ENCODE measurements at regions of chr2 and their contacts with region 1.

Region 1: DNA sequence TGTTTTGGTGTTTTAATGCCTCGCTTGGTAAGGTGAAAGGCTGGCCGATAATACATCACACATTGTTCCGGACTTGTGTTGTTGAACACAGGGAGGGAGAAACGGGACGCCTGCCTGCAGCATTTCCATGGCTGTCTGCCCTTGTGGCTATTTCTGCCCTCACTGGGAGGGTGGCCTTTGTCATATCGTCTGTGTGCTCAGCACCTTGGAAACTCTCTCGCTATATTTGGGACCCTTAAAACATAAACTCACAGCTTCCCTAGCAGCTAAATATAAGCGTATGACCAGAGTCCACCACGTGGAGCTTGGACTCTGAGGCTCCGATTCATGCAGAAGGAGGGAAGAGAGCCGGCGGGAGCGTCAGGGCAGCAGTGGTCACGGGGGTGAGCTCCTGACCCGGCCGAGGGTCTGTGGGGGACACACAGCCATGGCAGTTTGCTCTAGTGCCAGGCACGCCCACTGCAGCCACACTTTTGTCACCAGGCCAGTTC is 111.7 kb downstream of the SH3BP4 start:
- DNase-seq: peak in 4 of 5 donors; percentile 61 to 87 (median 78)
- ATAC-seq: peak; percentile 97 to 98 (median 98)
- H3K4me3 ChIP-seq: peak overlapping the region in 3 of 12 donors; percentile 2 to 19 (median 5)
- H3K27ac ChIP-seq: peak overlapping the region; percentile 49 to 92 (median 80)
- H3K4me1 ChIP-seq: peaks cover 0 to 26% (median 2%) of the 10 kb centered on the region in 12 donors
- H3K27me3 ChIP-seq: no peaks in the 10 kb centered on the region
- CTCF ChIP-seq: no peak
- POLR2A ChIP-seq: peak; percentile 20 to 53

Region 2: GRCh38 chr2:235050992-235051351 is 12.5 kb before region 1 on chr2:
- intact Hi-C with region 1: loop called in 1 of 10 experiments (anchors 1 kb)
- DNase-seq: peak; percentile 89 to 97 (median 93)
- ATAC-seq: peak; percentile 90 to 95 (median 90)
- H3K4me3 ChIP-seq: no peak overlapping the region
- H3K27ac ChIP-seq: peak overlapping the region; percentile 51 to 86 (median 78)
- H3K4me1 ChIP-seq: peaks cover 2 to 57% (median 27%) of the 10 kb centered on the region in 12 donors
- H3K27me3 ChIP-seq: no peaks in the 10 kb centered on the region
- CTCF ChIP-seq: peak in 6 of 12 donors; percentile 5 to 37 (median 18)
- POLR2A ChIP-seq: peak in 1 of 2 donors; percentile 30